Psoas muscle (tissue), 8 donors: ENCODE measurements at regions of chr2 and their contacts with region 1.

Region 1: DNA sequence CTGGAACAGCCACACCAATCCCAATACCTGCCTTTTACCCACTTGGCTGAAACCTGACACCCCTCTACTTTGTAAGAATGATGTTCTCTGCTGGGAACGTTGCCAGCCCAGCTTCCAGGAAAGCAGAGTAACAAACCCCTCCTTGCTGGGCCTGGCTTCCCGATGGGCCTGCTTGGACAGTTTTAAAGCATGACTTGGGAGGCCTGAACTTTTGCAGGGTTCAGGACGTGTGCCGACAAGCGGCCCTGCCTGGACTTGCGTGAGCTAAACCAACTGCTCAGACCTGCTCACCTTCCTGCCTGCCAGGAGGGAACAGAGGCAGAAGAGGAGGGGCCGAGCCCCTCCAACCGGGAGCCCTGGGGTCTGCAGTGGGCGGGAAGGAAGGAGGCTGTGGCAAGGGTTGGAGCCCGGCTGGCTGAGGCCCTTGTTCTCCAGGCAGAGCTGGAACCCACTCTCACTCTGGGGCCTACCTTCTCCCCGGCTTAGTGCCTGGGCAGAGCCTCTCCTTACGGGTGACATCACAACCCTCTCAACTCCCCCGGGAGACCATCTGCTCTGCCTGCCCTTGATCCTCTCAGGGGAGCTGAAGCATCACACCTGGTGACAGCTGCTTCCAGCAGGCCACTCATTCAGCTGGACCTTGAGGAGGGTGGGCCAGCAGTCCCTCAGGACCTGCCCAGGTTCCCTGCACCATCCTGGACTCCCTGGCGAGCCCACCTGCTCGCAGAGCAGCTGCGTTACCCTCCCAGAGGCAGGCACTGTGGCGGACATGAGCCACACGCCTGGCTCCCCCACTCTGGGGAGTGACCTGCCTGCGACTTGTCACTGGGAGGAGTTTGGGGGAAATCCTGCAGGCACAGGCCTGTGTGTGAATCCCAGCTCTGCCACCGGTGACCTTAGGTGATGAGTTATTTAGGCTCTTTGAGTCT is 13.2 kb downstream of the HS6ST1 start:
- DNase-seq: peak; percentile 86 to 87
- ATAC-seq: peak; percentile 52 to 69 (median 62)
- H3K4me3 ChIP-seq: peak overlapping the region; percentile 29
- H3K27ac ChIP-seq: peak overlapping the region; percentile 80
- H3K4me1 ChIP-seq: peaks cover 64% of the 10 kb centered on the region
- H3K27me3 ChIP-seq: no peaks in the 10 kb centered on the region
- CTCF ChIP-seq: no peak

Region 2: DNA sequence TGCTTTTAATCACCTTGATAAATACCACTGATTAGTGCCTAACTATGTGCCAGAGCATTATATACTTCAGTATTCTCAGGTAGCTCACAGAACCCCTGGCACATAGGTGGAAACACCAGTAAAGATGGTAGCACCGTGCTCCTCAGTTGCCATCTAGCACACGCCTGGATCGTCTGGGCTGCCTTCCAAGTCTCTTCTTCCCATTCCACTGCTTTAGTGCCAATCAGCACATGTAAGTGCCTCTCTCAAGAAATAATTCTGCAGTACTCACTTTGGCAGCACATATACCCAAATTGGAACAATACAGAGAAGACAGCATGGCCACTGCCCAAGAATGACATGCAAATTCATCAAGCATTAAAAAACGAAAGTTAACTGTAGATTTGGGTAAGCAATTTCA is 460.4 kb before region 1 on chr2:
- intact Hi-C with region 1: no loop called
- DNase-seq: no peak
- ATAC-seq: no peak
- H3K4me3 ChIP-seq: no peak overlapping the region
- H3K27ac ChIP-seq: no peak overlapping the region
- H3K4me1 ChIP-seq: no peaks in the 10 kb centered on the region
- H3K27me3 ChIP-seq: no peaks in the 10 kb centered on the region
- CTCF ChIP-seq: no peak

Region 3: DNA sequence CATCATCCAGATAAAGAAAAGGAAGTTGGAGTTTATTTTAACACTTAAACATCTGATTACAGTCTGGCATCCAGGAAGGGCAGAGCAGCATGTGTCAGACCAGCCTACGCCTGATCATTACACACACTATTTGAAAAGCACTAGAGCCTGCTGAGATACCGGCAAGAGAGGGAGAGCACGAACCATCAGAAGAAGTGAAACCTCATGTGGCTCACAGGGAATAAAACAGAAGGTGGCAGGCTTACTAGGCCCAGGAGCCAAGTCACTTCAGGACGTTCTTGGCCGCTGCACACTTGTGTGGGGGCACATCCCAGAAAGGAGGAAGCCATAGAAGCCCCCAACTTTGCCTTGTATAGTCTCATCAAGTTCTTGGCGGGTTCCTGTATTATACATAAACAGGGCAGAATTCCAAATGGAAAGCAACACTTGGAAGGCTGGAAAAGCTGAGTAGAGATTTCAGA is 108.9 kb before region 1 on chr2:
- intact Hi-C with region 1: loop called in 1 of 2 experiments (anchors 5 kb)
- DNase-seq: no peak
- ATAC-seq: no peak
- H3K4me3 ChIP-seq: no peak overlapping the region
- H3K27ac ChIP-seq: peak overlapping the region; percentile 36
- H3K4me1 ChIP-seq: peaks cover 40% of the 10 kb centered on the region
- H3K27me3 ChIP-seq: no peaks in the 10 kb centered on the region
- CTCF ChIP-seq: no peak